Naive thymus-derived CD4-positive, alpha-beta T cell (primary cell): ENCODE measurements at regions of chr1 and their contacts with region 1.

Region 1: DNA sequence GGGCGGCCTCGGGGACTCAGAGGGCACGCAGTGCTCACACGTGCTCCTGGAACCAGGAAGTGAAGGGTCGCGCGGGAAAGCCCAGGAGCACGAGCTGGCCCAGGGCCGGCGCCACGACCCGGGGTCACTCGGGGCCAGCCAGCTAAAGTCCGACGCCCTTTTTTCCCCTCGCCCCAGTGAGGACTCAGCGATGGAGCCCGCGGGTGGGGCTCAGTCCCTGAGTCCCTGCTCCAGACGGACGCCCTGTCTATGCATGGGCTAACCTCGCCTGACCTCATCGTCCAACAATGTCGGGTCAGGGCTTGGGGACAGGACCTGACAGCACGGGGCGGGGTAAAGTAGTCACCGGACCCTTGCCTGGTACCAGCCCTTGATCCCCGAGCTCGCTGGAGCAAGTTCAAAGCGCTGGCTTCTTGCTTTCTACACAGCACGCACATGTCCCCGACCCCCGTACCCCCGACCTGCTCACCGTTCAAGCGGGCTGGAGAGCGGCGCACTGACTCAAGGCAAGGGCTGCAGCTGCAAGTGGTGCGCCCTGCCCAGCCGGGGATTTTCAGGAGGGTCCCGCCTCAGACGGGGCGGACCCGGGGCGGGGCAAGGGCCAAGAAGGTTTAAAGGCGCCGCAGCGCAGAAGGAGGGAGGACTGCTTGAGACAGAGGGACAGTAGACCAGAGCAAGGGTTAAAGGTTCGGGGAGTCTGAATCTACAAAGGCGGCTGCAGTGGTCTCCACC is at the start of gene TAGLN2:
- DNase-seq: peak; percentile 81 to 94 (median 86)
- ATAC-seq: peak; percentile 63
- H3K4me3 ChIP-seq: peak within 1 kb of the TSS; percentile 95
- H3K4me3 Mint-ChIP-seq: peak within 1 kb of the TSS; percentile 88 to 99 (median 94)
- H3K27ac ChIP-seq: peak within 1 kb of the TSS; percentile 95
- H3K27ac Mint-ChIP-seq: peak within 1 kb of the TSS; percentile 96 to 100 (median 99)
- H3K4me1 ChIP-seq: peaks cover 27 to 35% of the 10 kb centered on the region in 2 donors
- H3K4me1 Mint-ChIP-seq: peaks cover 34 to 54% (median 46%) of the 10 kb centered on the region in 7 donors
- H3K27me3 ChIP-seq: no peaks in the 10 kb centered on the region
- H3K27me3 Mint-ChIP-seq: peaks cover 0 to 11% (median 0%) of the 10 kb centered on the region in 5 donors
- total RNA-seq, gene TAGLN2: 116 to 450 (median 284) TPM

Region 2: DNA sequence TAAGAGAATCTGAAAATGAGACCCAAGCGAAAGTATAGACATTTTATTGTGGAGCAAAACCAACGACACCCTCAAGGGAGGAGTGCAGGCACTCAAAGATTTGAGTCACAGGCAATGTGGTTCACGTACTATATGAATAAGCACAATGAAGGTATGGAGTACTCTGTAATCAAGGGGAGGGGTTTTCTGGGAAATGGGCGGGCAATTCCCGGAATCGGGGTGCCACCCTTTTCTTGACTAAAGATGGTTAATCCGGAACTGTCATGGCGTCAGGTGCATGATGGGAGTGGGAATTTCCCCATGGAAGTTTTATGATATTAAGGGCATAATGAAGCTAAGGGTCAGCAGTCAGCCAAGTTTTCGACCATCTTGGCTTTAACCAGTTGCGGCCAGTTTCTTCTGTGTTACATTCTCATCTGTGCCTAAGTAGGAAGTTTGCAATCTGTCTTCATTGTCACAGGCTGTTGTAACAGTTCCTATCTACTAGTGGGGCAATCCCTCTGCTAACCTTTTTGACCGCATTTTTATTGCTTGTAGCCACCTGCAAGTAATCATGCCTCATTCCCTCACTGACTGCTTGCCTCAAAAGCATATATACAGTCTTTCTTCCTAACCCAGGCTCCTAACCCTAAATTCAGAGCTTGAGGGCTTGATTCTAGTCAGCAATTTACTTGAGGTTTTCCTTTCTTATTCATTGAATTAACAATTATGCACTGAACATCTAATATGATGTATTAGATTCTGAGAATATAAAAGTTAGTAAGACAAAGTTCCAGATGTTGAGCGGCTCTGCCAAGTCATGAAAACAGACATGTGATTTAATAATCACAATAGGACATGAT is 847.8 kb before region 1 on chr1:
- CTCF ChIA-PET with region 1: no interaction called
- POLR2A ChIA-PET with region 1: no interaction called
- intact Hi-C with region 1: loop called in 1 of 2 experiments (anchors 2 kb)
- DNase-seq: peak in 2 of 9 donors; percentile 37 to 96
- ATAC-seq: peak; percentile 79
- H3K4me3 ChIP-seq: peak overlapping the region; percentile 38
- H3K4me3 Mint-ChIP-seq: peak overlapping the region in 3 of 10 donors; percentile 3 to 90 (median 38)
- H3K27ac ChIP-seq: peak overlapping the region; percentile 18
- H3K27ac Mint-ChIP-seq: peak overlapping the region in 3 of 9 donors; percentile 65 to 99 (median 65)
- H3K4me1 ChIP-seq: peaks cover 0 to 28% of the 10 kb centered on the region in 2 donors
- H3K4me1 Mint-ChIP-seq: peaks cover 0 to 40% (median 4%) of the 10 kb centered on the region in 7 donors
- H3K27me3 ChIP-seq: no peaks in the 10 kb centered on the region
- H3K27me3 Mint-ChIP-seq: peaks cover 0 to 3% (median 1%) of the 10 kb centered on the region in 5 donors

Region 3: DNA sequence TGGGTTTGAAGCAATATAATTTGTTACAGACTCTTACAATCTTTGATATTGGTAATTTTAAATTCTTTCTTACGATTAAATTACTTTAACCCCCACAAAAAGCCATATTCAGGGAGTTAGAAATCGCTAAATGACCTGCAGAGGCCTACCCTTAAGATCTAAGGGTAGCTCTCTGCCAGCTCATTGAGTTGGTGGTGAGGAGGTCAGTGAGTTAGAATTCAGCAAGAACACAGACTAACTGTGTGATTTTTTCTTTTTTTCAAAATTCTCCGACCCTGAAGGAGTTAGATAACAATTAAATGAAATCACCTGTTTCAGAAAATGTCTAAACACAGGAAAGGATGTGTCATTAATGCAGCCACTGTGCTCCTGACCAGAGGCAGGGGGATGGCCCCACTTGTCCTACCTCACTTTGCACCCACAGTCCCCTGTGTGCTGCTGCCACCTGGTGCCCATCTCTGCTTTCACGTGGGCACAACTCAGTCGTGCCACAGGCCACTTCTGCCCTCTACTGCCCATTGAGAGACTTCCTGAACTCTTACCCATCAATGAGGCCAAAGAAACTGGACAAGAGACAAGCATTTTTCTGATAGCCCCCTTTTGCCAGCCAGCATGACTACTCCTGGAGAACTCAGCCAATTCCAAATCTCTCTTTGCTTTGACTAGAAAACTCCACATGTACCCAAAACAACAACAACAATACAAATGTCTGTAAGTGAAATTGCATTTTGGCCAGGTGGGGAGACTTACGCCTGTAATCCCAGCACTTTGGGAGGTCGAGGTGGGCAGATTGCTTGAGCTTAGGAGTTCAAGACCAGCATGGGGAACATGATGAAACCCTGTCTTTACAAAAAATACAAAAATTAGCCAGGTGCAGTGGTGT is 33.6 kb before region 1 on chr1:
- CTCF ChIA-PET with region 1: interaction called, 34 read pairs
- POLR2A ChIA-PET with region 1: interaction called, 6 read pairs
- intact Hi-C with region 1: loop called (anchors 1 kb)
- DNase-seq: peak; percentile 53 to 76 (median 65)
- ATAC-seq: peak; percentile 96
- H3K4me3 ChIP-seq: no peak overlapping the region
- H3K4me3 Mint-ChIP-seq: no peak overlapping the region
- H3K27ac ChIP-seq: no peak overlapping the region
- H3K27ac Mint-ChIP-seq: peak overlapping the region in 1 of 9 donors; percentile 37
- H3K4me1 ChIP-seq: peaks cover 0 to 17% of the 10 kb centered on the region in 2 donors
- H3K4me1 Mint-ChIP-seq: peaks cover 0 to 19% (median 0%) of the 10 kb centered on the region in 7 donors
- H3K27me3 ChIP-seq: no peaks in the 10 kb centered on the region
- H3K27me3 Mint-ChIP-seq: peaks cover 0 to 24% (median 0%) of the 10 kb centered on the region in 5 donors

Region 4: DNA sequence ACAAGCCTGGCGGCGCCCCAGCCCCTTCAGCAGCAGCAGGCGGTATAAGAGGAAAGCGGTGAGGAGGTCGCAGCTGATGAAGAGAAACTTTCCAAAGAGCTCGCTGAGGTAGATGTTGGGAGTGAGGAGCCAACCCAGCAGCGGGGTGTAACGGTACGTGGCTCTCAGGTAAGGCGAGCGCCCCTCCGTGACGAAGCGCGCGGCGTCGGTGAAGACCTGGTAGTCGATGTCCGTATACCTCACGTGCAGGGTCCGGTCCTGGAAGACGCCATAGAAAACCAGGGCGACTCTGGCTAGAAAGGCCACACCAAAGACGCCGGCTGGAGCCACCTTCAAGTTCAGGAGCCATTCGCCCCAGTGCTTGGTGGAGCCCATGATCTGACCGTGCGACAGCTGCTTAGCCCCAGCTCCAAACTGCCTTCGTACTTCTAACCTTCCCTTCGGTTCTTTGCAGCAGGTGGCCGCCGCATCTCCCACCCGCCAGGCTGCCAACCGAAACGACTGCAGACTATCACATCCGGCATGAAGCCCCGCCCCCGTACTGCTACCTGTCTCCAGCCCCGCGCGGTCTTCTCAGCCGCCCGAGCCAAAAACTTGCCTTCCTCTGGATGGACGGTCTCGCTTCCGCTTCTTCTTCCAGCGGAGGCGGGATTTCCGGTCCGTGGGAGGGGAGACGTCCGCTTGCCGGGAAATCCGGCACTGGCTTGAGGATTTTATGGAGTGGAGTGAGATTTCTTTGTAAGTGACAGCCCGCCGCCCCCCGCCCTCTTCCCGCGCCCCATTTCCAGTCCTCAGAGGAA is 106.4 kb after region 1 on chr1 and contains the start of gene PIGM:
- CTCF ChIA-PET with region 1: no interaction called
- POLR2A ChIA-PET with region 1: interaction called, 5 read pairs
- intact Hi-C with region 1: loop called (anchors 1 kb)
- DNase-seq: peak; percentile 73 to 91 (median 90)
- ATAC-seq: peak; percentile 98
- H3K4me3 ChIP-seq: peak within 1 kb of the TSS; percentile 68
- H3K4me3 Mint-ChIP-seq: peak within 1 kb of the TSS; percentile 90 to 100 (median 98)
- H3K27ac ChIP-seq: peak within 1 kb of the TSS; percentile 69
- H3K27ac Mint-ChIP-seq: peak within 1 kb of the TSS; percentile 69 to 96 (median 89)
- H3K4me1 ChIP-seq: peaks cover 12 to 14% of the 10 kb centered on the region in 2 donors
- H3K4me1 Mint-ChIP-seq: peaks cover 30 to 56% (median 45%) of the 10 kb centered on the region in 7 donors
- H3K27me3 ChIP-seq: no peaks in the 10 kb centered on the region
- H3K27me3 Mint-ChIP-seq: peaks cover 0 to 18% (median 0%) of the 10 kb centered on the region in 5 donors
- total RNA-seq, gene PIGM: 4.0 to 11.4 (median 7.0) TPM

Region 5: DNA sequence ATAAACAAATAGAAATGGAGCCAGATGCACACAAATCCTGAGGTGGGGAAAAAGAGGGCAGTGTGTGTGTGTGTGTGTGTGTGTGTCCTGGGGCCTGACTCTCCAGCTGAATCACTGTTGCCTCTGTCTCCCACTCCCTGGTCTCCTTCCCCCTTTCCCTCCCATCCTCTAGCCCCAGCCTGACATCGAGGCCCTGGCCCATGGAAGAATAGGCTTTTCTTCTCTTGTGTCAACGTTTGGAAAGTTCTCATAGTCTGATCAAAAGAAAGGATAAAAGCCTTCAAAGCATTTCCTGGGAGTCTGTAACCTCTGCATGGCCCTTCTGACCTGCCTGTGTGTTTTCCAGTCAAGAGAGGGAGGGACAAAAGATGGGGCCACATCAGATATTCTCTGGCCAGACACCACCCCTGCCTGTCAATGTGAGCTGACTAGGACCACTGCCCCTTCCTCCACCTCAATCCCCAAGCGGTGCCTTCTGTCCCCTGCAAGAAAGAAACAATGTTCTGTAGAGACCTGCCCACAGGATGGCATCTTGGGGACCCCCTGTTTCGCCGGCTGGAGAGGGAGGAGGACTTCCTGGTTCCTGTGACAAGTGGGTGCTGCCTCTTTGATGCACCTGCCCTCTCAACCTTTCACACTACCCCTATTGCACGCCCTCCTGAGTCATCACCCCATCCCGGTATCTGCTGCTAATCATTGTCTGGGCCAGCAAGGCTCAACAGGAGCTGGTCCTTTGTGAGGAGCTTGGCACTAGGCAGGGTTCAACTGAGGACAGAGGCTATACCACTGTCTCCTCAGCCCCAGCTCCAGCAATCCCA is 128.6 kb after region 1 on chr1:
- CTCF ChIA-PET with region 1: no interaction called
- POLR2A ChIA-PET with region 1: no interaction called
- intact Hi-C with region 1: no loop called
- DNase-seq: no peak
- ATAC-seq: no peak
- H3K4me3 ChIP-seq: no peak overlapping the region
- H3K4me3 Mint-ChIP-seq: no peak overlapping the region
- H3K27ac ChIP-seq: no peak overlapping the region
- H3K27ac Mint-ChIP-seq: no peak overlapping the region
- H3K4me1 ChIP-seq: no peaks in the 10 kb centered on the region
- H3K4me1 Mint-ChIP-seq: peaks cover 0 to 4% (median 0%) of the 10 kb centered on the region in 7 donors
- H3K27me3 ChIP-seq: no peaks in the 10 kb centered on the region
- H3K27me3 Mint-ChIP-seq: peaks cover 5 to 46% (median 28%) of the 10 kb centered on the region in 5 donors

Region 6: DNA sequence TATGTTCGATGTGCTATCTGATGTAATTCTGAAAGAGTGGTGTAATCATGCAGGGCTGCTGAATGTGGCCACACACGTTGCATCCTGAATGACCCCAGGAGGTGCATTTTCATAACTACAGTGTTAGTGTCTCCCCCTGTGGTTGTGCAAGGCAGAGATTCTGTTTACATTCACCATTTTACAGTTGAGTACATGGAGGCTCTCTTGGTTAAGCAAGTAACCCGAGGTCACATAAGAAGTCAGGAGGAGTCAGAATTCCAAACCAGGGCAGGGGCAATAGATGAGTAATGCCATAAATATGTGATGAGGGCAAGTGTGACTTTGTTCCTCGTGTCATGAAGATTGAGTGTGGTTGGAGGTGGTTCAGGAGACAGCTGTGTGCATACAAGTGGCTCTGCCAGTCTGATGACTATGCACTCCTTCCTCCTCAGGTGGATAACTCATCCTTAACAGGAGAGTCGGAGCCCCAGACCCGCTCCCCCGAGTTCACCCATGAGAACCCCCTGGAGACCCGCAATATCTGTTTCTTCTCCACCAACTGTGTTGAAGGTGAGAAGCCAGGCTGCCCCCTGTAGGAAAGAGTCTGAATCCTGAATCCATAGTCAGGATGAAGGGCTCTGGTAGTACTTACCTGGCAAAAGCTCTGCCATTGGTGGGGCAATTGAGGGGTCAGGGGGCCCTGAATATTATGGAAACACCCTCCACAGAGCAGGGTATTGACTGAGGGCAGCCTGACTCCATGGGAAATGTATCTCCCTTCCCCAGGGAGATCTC is 199.7 kb after region 1 on chr1:
- CTCF ChIA-PET with region 1: no interaction called
- POLR2A ChIA-PET with region 1: no interaction called
- intact Hi-C with region 1: no loop called
- DNase-seq: no peak
- ATAC-seq: no peak
- H3K4me3 ChIP-seq: no peak overlapping the region
- H3K4me3 Mint-ChIP-seq: no peak overlapping the region
- H3K27ac ChIP-seq: no peak overlapping the region
- H3K27ac Mint-ChIP-seq: no peak overlapping the region
- H3K4me1 ChIP-seq: no peaks in the 10 kb centered on the region
- H3K4me1 Mint-ChIP-seq: no peaks in the 10 kb centered on the region
- H3K27me3 ChIP-seq: no peaks in the 10 kb centered on the region
- H3K27me3 Mint-ChIP-seq: peaks cover 0 to 9% (median 4%) of the 10 kb centered on the region in 5 donors

Region 7: GRCh38 chr1:160342953-160343869 is 418.1 kb after region 1 on chr1 and contains the starts of genes COPA and NCSTN:
- CTCF ChIA-PET with region 1: no interaction called
- POLR2A ChIA-PET with region 1: no interaction called
- intact Hi-C with region 1: loop called in 1 of 2 experiments (anchors 10 kb)
- DNase-seq: peak; percentile 67 to 93 (median 86)
- ATAC-seq: peak; percentile 98
- H3K4me3 ChIP-seq: peak within 1 kb of the TSS; percentile 87
- H3K4me3 Mint-ChIP-seq: peak within 1 kb of the TSS; percentile 99 to 100 (median 100)
- H3K27ac ChIP-seq: peak within 1 kb of the TSS; percentile 98
- H3K27ac Mint-ChIP-seq: peak within 1 kb of the TSS; percentile 98 to 100 (median 100)
- H3K4me1 ChIP-seq: peaks cover 23 to 29% of the 10 kb centered on the region in 2 donors
- H3K4me1 Mint-ChIP-seq: peaks cover 32 to 78% (median 66%) of the 10 kb centered on the region in 7 donors
- H3K27me3 ChIP-seq: no peaks in the 10 kb centered on the region
- H3K27me3 Mint-ChIP-seq: no peaks in the 10 kb centered on the region
- total RNA-seq, gene COPA: 104 to 151 (median 118) TPM
- total RNA-seq, gene NCSTN: 68.4 to 91.1 (median 73.5) TPM

Region 8: GRCh38 chr1:161549652-161550051 is 1624.5 kb after region 1 on chr1 and contains the start of gene FCGR3A:
- CTCF ChIA-PET with region 1: no interaction called
- POLR2A ChIA-PET with region 1: no interaction called
- intact Hi-C with region 1: loop called in 1 of 2 experiments (anchors 10 kb)
- DNase-seq: no peak
- ATAC-seq: peak; percentile 46
- H3K4me3 ChIP-seq: no peak within 1 kb of the TSS
- H3K4me3 Mint-ChIP-seq: peak within 1 kb of the TSS in 1 of 10 donors; percentile 77
- H3K27ac ChIP-seq: no peak within 1 kb of the TSS
- H3K27ac Mint-ChIP-seq: peak within 1 kb of the TSS in 1 of 9 donors; percentile 17
- H3K4me1 ChIP-seq: peaks cover 0 to 21% of the 10 kb centered on the region in 2 donors
- H3K4me1 Mint-ChIP-seq: peaks cover 5 to 16% (median 7%) of the 10 kb centered on the region in 7 donors
- H3K27me3 ChIP-seq: no peaks in the 10 kb centered on the region
- H3K27me3 Mint-ChIP-seq: peaks cover 0 to 5% (median 0%) of the 10 kb centered on the region in 5 donors
- total RNA-seq, gene FCGR3A: 1.5 to 190 (median 9.3) TPM in 4 of 5 experiments, not detected in the other